T-cell (primary cell): ENCODE measurements at regions of chr20 and their contacts with region 1.

Region 1: GRCh38 chr20:64010711-64011237 is 25.2 kb upstream of the C20orf204 start:
- DNase-seq: no peak
- ATAC-seq: no peak
- H3K4me3 ChIP-seq: peak overlapping the region in 1 of 2 donors; percentile 18
- H3K4me3 Mint-ChIP-seq: peak overlapping the region in 2 of 3 donors; percentile 49 to 61
- H3K27ac ChIP-seq: peak overlapping the region; percentile 82
- H3K27ac Mint-ChIP-seq: peak overlapping the region; percentile 74 to 81
- H3K4me1 ChIP-seq: peaks cover 9 to 41% of the 10 kb centered on the region in 2 experiments
- H3K4me1 Mint-ChIP-seq: peaks cover 45 to 75% (median 51%) of the 10 kb centered on the region in 3 donors
- H3K27me3 ChIP-seq: no peaks in the 10 kb centered on the region
- H3K27me3 Mint-ChIP-seq: no peaks in the 10 kb centered on the region

Region 2: DNA sequence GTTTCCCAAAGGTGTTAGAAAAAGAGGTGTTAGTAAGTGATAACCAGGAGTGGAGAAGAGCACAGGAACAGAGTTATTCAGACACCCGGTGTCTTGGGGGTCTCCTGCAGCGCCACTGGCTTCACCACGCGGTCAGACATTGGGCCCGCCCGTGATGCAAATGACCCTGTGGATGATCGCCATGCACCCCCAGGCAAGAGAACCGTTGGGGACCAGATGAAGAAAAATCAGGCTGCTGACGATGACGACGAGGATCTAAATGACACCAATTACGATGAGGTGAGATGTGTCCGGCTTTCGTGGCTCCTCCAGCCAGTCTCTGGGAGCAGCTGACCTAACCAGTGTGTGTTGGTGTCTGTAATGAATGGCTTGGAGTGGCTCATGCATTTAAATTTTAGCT is 27.8 kb before region 1 on chr20:
- CTCF ChIA-PET with region 1: interaction called, 4 to 10 read pairs
- POLR2A ChIA-PET with region 1: no interaction called
- DNase-seq: no peak
- ATAC-seq: no peak
- H3K4me3 ChIP-seq: no peak overlapping the region
- H3K4me3 Mint-ChIP-seq: peak overlapping the region; percentile 49 to 84 (median 64)
- H3K27ac ChIP-seq: no peak overlapping the region
- H3K27ac Mint-ChIP-seq: peak overlapping the region in 1 of 2 donors; percentile 21
- H3K4me1 ChIP-seq: peaks cover 29 to 44% of the 10 kb centered on the region in 2 experiments
- H3K4me1 Mint-ChIP-seq: peaks cover 45 to 48% (median 48%) of the 10 kb centered on the region in 3 donors
- H3K27me3 ChIP-seq: no peaks in the 10 kb centered on the region
- H3K27me3 Mint-ChIP-seq: no peaks in the 10 kb centered on the region

Region 3: GRCh38 chr20:64038565-64039292 is 28.0 kb after region 1 on chr20:
- CTCF ChIA-PET with region 1: no interaction called
- POLR2A ChIA-PET with region 1: no interaction called
- DNase-seq: peak; percentile 41 to 85 (median 68)
- ATAC-seq: peak; percentile 69 to 85 (median 78)
- H3K4me3 ChIP-seq: peak overlapping the region; percentile 50 to 53
- H3K4me3 Mint-ChIP-seq: peak overlapping the region; percentile 50 to 79 (median 78)
- H3K27ac ChIP-seq: no peak overlapping the region
- H3K27ac Mint-ChIP-seq: peak overlapping the region in 1 of 2 donors; percentile 71
- H3K4me1 ChIP-seq: peaks cover 18 to 85% of the 10 kb centered on the region in 2 experiments
- H3K4me1 Mint-ChIP-seq: peaks cover 53 to 71% (median 62%) of the 10 kb centered on the region in 3 donors
- H3K27me3 ChIP-seq: peaks cover 0 to 28% of the 10 kb centered on the region in 2 experiments
- H3K27me3 Mint-ChIP-seq: no peaks in the 10 kb centered on the region

Region 4: DNA sequence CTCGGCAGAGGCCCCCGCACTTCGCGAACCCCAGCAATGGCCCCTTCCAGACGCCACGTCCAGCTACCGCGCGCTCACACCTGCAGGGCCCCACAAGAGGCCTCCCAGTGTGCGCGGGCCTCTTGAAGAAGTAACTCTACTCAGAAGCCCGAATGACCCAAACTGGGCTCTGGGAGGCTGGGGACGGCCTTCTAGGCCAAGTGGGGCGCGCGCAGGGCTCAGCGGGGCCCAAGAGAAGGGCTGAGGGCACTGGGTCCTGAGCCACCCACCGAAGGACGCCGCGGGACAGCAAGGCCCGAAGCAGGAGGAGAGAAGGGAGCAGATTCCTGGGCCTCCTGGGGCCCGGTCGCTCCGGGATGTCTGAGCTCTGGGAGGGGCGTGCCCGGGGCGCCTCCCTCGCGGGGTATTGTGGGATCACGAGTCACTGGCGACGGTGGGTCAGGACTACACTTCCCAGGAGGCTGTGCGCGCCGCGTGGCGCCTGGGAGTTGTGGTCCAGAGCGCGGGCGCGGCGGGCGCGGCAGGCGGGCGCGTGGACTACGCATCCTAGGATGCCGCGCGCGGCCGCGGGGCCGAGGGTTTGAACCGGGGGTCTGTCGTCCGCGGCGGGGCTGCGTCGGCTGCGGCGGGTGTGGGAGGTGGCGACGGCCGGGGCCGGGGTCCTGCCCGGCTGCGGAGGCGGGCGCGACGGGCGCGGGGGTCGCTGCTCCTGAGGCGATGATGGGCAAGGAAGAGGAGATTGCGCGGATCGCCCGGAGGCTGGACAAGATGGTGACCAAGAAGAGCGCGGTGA is 52.0 kb after region 1 on chr20 and contains the start of gene TCEA2:
- CTCF ChIA-PET with region 1: no interaction called
- POLR2A ChIA-PET with region 1: no interaction called
- DNase-seq: peak; percentile 82 to 96 (median 90)
- ATAC-seq: peak; percentile 92 to 96 (median 94)
- H3K4me3 ChIP-seq: peak within 1 kb of the TSS; percentile 52 to 54
- H3K4me3 Mint-ChIP-seq: peak within 1 kb of the TSS; percentile 82 to 88 (median 84)
- H3K27ac ChIP-seq: peak within 1 kb of the TSS; percentile 44
- H3K27ac Mint-ChIP-seq: peak within 1 kb of the TSS; percentile 72 to 77
- H3K4me1 ChIP-seq: peaks cover 11 to 59% of the 10 kb centered on the region in 2 experiments
- H3K4me1 Mint-ChIP-seq: peaks cover 43 to 47% (median 46%) of the 10 kb centered on the region in 3 donors
- H3K27me3 ChIP-seq: peaks cover 0 to 3% of the 10 kb centered on the region in 2 experiments
- H3K27me3 Mint-ChIP-seq: no peaks in the 10 kb centered on the region
- total RNA-seq, gene TCEA2: 25.8 to 49.7 (median 40.1) TPM